HEK293 (cell line): ENCODE measurements at regions of chr6 and their contacts with region 1.

Region 1: GRCh38 chr6:24991810-24992467 is 56.2 kb upstream of the RIPOR2 start:
- H3K4me3 ChIP-seq: no peak overlapping the region
- H3K27ac ChIP-seq: no peak overlapping the region
- H3K4me1 ChIP-seq: no peaks in the 10 kb centered on the region
- CTCF ChIP-seq: peak; percentile 50; the same call in 1 of the 2 replicates

Region 2: DNA sequence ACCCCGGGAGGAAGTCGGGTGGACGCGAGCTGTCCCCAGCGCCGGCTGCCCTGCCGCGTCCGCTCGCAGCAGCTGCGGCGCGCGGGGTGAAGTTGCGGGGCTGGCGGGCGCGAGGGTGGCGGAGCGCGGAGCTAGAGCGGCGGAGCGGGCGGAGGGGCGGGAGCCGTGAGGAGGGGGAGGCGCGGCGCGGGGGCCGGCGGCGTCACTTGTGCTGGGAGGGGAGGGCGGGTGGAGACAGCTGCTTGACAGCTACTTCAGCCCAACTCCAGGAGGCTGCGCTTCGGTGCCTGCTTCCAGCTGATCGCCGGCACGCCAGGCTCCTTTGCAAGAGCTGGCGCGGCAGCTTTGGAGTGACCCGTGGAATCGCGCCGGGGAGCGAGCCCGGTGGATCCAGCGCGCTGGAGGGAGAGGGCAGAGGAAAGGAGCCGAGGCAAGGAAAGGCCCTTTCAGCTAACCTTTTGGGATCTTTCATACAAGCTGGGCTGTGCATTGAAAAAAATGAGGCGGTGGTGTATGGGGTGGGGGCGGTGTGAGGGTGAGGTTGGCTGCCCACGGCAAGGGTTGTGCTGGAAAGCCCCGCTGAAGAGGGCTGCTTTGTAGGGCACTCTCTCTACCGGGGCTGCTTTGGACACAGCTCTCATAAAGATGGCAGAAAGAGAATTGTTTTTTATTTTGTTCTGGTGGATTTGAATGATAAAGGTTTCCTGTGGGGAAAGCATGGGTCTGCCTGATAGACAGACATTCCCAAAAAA is 80.8 kb before region 1 on chr6:
- CTCF ChIA-PET with region 1: interaction called, 15 read pairs
- POLR2A ChIA-PET with region 1: no interaction called
- H3K4me3 ChIP-seq: peak overlapping the region; percentile 65
- H3K27ac ChIP-seq: no peak overlapping the region; the same call in 1 of the 2 replicates
- H3K4me1 ChIP-seq: peaks cover 17% of the 10 kb centered on the region
- CTCF ChIP-seq: no peak

Region 3: DNA sequence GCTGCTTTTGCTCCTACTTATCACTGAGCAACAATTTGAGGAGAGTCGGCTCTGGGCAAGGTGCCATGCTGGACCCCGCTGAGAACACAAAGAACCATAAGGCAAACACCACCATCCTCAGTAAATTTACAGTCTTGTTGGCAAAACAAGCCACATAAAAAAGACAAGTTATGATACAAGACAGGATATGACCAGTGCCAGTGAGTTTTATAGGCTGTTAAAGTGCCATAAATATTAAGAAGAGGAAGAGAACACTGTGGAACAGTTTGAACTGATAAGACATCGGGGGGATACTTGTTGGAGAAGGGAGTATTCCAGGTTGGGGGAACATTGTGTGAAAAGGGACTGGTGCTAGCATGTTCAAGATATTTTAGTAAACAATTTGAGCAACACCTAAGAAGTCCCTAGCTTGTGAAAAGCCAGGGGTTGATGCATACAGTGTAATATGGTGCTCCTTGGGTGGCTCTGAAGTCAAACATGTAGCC is 30.9 kb before region 1 on chr6:
- CTCF ChIA-PET with region 1: interaction called, 16 read pairs
- POLR2A ChIA-PET with region 1: no interaction called
- H3K4me3 ChIP-seq: no peak overlapping the region
- H3K27ac ChIP-seq: no peak overlapping the region
- H3K4me1 ChIP-seq: peaks cover 6% of the 10 kb centered on the region; the same call in 1 of the 2 replicates
- CTCF ChIP-seq: no peak

Region 4: DNA sequence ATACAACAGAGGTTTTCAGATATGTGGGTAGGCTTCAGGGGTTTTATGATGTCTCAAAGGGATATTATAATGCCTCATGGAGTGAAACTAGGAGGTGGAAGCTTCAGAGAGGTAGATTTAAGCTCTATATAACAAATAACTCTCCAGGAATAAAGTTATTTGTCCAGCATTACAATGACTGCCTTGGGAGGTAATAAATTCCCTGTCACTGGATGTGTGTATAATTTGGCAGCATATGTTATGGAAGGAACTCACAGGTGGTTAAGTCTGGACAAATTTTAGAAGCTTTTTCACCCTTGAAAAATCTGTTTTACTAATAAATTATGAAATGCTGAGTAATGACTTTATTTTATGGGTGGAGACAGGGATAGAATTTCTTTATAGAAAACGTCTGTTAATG is 19.4 kb before region 1 on chr6:
- CTCF ChIA-PET with region 1: interaction called, 30 read pairs
- POLR2A ChIA-PET with region 1: no interaction called
- H3K4me3 ChIP-seq: no peak overlapping the region
- H3K27ac ChIP-seq: no peak overlapping the region
- H3K4me1 ChIP-seq: no peaks in the 10 kb centered on the region
- CTCF ChIP-seq: no peak

Region 5: DNA sequence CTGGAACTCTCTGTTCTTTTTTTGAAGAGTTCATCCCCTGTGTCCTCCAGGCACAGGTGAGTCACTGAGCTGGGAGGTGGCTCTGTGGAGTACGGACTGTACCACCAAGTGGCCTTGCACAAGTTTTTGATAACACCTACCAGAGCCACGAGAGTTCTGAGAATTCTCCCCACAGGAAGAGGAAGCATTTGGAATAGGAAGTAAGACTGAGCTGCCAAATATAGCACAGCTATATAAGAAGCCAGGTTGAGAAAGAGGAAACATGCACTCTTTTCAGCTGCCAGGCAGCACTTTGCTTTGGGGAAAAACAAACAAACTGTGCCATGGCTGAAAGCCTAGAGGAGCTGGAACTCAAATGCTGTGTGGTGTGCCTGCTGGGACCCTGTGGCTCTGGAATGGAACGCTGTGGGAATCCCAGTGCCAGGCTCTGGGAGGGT is 14.6 kb after region 1 on chr6:
- CTCF ChIA-PET with region 1: interaction called, 53 read pairs
- POLR2A ChIA-PET with region 1: no interaction called
- H3K4me3 ChIP-seq: no peak overlapping the region
- H3K27ac ChIP-seq: no peak overlapping the region
- H3K4me1 ChIP-seq: no peaks in the 10 kb centered on the region
- CTCF ChIP-seq: no peak

Region 6: DNA sequence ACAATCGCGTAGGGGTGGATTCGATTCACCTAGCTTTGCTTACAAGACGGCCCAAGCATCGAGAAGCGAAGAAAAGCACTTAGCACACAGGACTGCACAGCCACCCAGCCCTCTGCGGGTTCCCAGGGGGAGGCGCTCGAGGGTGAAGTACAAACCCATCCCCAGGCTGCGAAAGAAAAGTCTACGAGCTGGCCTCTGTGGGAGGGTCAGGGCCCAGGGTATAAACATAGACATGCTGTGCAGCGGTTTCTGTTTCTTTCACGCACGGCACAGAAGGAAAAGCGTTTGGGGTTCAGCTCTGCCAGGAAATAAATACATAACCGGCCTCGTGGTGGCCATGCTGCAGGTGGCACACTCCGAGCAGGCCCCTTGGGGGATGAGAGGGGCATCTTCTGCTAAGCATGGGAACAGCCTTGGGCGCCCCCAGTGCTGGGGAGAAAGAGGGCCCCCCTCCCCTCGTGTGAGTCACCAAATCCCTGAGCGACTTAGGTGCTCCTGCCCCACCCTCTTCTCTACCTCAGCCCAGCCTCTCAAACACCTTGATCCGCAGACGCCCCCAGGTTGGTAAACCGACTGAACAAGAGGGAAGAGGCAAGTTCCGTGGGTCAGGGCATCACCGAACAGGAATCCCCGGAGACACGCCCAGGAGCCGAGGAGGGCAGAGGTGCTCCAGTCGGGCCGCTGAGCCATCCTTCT is 35.4 kb after region 1 on chr6:
- CTCF ChIA-PET with region 1: interaction called, 16 read pairs
- POLR2A ChIA-PET with region 1: no interaction called
- H3K4me3 ChIP-seq: no peak overlapping the region
- H3K27ac ChIP-seq: no peak overlapping the region
- H3K4me1 ChIP-seq: no peaks in the 10 kb centered on the region
- CTCF ChIP-seq: no peak

Region 7: DNA sequence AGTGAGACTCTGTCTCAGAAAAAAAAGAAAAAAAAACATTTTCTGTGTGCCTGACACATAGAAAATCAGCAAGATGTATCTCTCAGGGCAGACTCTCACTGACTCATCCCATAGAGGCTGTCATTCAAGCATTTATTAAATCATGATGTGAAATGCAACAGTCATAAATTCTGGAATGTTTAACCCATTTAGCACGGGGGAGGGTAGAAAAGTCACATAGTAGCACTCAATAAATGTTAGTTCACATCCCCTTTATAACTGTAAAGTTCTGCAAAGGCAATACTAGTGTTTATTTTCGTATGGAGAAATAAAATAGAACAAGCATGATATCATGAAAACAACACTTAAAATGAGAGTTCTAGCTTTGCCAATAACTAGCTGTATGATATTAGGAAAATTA is 271.7 kb after region 1 on chr6:
- CTCF ChIA-PET with region 1: no interaction called
- POLR2A ChIA-PET with region 1: no interaction called
- H3K4me3 ChIP-seq: no peak overlapping the region
- H3K27ac ChIP-seq: no peak overlapping the region
- H3K4me1 ChIP-seq: no peaks in the 10 kb centered on the region; the same call in 1 of the 2 replicates
- CTCF ChIP-seq: no peak